Endothelial cell of umbilical vein (primary cell): ENCODE measurements at regions of chr2 and their contacts with region 1.

Region 1: DNA sequence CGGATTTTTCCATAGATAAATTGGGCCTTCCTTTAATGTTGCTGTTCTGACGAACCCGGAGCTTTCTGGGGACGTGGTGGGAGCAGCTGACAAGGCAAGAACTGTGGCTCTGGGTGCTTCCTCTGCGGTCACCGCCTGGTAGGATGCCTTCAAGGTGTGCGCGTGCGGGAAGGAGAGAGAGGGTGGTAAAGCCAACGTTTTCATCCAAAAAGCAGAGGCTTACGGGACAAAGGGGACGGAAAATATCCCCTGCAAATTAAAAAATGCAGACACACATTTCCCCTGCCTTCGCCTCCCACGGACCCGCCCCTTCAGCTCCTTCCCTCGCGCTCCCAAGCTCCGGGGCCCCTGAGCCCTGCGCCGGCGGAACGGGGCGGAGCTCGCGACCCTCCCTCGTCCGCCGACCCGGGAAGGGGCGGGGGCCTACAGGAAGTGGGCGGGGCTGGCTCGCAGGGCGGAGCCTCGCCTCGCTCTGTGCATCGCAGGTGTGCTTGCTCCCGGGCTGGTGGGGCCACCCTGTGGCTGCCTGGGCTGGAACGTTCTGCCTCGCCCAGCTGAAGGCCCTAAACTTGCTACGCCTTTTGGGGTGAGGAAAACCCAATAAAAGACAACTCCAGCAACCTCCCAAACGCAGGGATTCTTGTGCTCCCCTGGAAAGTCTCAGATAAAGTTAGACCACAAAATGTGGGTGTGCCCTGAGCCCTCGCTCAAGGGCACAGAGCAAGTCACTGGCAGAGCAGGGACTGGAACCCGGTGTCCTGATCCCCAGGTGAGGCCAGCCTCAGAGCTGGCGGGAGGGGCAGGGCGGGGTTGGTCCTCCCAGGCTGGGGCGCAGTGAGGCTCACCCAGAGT is 25.4 kb upstream of the SLC66A3 start:
- DNase-seq: no peak
- H3K4me3 ChIP-seq: no peak overlapping the region
- H3K27ac ChIP-seq: no peak overlapping the region
- H3K4me1 ChIP-seq: peaks cover 28% of the 10 kb centered on the region
- H3K27me3 ChIP-seq: peaks cover 0 to 1% of the 10 kb centered on the region in 2 experiments
- CTCF ChIP-seq: peak in 1 of 2 donors; percentile 20
- POLR2A ChIP-seq: no peak

Region 2: GRCh38 chr2:10935953-10936942 is 193.6 kb before region 1 on chr2:
- CTCF ChIA-PET with region 1: no interaction called
- POLR2A ChIA-PET with region 1: no interaction called
- dilution Hi-C with region 1: no loop called
- intact Hi-C with region 1: loop called (anchors 1 kb)
- DNase-seq: peak; percentile 96
- H3K4me3 ChIP-seq: no peak overlapping the region
- H3K27ac ChIP-seq: peak overlapping the region; percentile 88
- H3K4me1 ChIP-seq: peaks cover 31% of the 10 kb centered on the region
- H3K27me3 ChIP-seq: peaks cover 0 to 2% of the 10 kb centered on the region in 2 experiments
- CTCF ChIP-seq: no peak
- POLR2A ChIP-seq: no peak

Region 3: GRCh38 chr2:11203480-11203879 is 73.7 kb after region 1 on chr2:
- CTCF ChIA-PET with region 1: interaction called, 19 read pairs
- POLR2A ChIA-PET with region 1: no interaction called
- dilution Hi-C with region 1: no loop called
- intact Hi-C with region 1: loop called (anchors 2 kb)
- DNase-seq: peak; percentile 71
- H3K4me3 ChIP-seq: no peak overlapping the region
- H3K27ac ChIP-seq: peak overlapping the region; percentile 84
- H3K4me1 ChIP-seq: peaks cover 27% of the 10 kb centered on the region
- H3K27me3 ChIP-seq: no peaks in the 10 kb centered on the region
- CTCF ChIP-seq: no peak
- POLR2A ChIP-seq: no peak

Region 4: GRCh38 chr2:11239666-11240462 is 110.0 kb after region 1 on chr2:
- CTCF ChIA-PET with region 1: interaction called, 32 read pairs
- POLR2A ChIA-PET with region 1: no interaction called
- dilution Hi-C with region 1: no loop called
- intact Hi-C with region 1: no loop called
- DNase-seq: peak; percentile 50
- H3K4me3 ChIP-seq: no peak overlapping the region
- H3K27ac ChIP-seq: peak overlapping the region; percentile 10
- H3K4me1 ChIP-seq: peaks cover 4% of the 10 kb centered on the region
- H3K27me3 ChIP-seq: no peaks in the 10 kb centered on the region
- CTCF ChIP-seq: no peak
- POLR2A ChIP-seq: no peak

Region 5: DNA sequence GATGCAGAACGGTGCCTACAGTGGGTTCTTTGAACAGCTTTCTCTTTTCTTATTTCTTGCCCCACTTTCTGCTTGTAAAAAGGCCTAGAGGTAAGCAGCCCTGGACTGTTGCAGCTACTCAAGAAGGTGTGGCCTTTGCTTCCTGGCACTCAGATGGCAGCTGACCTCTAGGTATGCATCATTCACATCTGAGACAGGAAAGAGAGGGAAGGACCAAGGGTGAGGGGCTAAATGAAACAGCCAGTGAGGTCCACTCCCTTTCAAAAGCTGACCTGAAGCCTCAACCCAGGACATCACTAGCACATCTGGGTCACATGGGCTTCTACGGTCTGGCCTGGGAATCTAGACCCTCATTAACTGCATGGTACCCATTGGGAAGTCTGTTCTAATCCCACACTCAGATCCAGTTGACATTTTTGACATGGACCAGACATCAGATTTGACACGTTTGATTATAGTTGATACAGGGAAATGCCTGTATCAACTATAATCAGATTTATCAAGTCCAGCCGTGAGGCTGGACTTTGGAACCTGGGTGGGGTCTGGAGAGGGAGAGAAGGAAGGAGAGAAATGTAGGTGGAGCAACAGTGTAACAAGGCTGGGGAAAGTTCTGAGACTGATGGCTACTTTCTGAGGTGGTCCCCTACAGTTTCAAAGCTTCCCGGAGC is 275.9 kb after region 1 on chr2:
- CTCF ChIA-PET with region 1: interaction called, 162 read pairs
- POLR2A ChIA-PET with region 1: no interaction called
- dilution Hi-C with region 1: no loop called
- intact Hi-C with region 1: no loop called
- DNase-seq: no peak
- H3K4me3 ChIP-seq: no peak overlapping the region
- H3K27ac ChIP-seq: no peak overlapping the region
- H3K4me1 ChIP-seq: peaks cover 6% of the 10 kb centered on the region
- H3K27me3 ChIP-seq: no peaks in the 10 kb centered on the region
- CTCF ChIP-seq: no peak
- POLR2A ChIP-seq: no peak

Region 6: DNA sequence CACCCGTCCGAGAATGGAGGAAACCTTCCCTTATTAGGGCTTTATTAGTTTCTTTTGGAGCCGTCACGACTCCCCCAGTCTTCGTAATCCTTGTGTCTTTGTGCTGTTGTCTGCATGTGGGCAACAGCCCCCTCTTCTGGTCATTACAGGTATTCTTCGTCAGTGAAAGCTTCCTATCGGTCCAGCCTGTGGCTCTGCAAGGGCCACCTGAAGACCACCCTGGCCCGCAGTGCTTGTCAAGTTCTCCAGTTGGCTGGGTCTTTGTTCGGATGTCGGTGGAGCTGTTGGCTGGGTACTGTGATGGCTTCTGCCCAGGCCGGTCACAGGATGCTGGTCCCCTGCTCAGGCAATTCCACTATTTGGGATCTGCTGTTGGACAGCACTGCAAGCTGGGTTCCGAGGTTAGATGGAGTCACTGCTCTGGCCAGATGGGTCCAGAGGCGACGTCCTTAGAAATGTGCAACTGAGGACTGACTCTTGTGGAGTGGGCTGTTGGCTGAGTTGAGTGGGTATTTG is 317.0 kb after region 1 on chr2:
- CTCF ChIA-PET with region 1: interaction called, 187 read pairs
- POLR2A ChIA-PET with region 1: no interaction called
- dilution Hi-C with region 1: no loop called
- intact Hi-C with region 1: loop called (anchors 1 kb)
- DNase-seq: peak; percentile 71
- H3K4me3 ChIP-seq: no peak overlapping the region
- H3K27ac ChIP-seq: no peak overlapping the region
- H3K4me1 ChIP-seq: no peaks in the 10 kb centered on the region
- H3K27me3 ChIP-seq: no peaks in the 10 kb centered on the region
- CTCF ChIP-seq: peak; percentile 72 to 75
- POLR2A ChIP-seq: no peak

Region 7: DNA sequence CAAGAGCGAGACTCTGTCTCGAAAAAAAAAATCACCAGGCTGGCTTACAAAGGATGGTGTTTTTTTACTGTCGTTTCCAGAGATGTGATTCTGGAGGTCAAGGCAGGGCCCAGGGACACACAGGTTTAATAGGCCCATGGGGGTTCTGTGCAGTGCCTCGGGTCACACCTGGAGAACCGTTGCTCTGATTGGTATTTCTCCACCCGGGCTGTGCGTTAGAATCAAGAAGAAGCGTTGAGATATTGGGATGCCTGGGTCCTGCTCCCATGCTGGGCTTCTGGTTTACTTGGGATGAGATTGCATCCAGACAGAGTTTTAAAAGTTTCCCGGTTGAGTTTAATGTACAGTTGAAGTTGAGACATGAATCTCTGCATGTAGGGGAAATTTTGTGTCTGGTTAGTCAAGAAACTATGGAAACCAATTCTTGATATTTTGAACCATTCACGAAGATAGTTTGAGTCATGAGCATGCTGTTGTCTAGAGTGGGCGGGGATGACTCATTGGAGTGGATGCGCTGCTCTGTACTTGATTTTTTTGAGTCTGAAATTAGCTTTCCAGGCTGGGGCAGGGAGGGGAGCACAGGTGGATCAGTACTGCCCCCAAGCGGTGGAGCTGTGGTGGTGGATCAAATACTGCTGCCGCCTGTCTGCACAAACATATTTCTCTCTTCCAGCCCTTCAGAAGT is 454.2 kb after region 1 on chr2:
- CTCF ChIA-PET with region 1: interaction called, 239 read pairs
- POLR2A ChIA-PET with region 1: no interaction called
- dilution Hi-C with region 1: no loop called
- intact Hi-C with region 1: loop called (anchors 1 kb)
- DNase-seq: peak; percentile 87
- H3K4me3 ChIP-seq: no peak overlapping the region
- H3K27ac ChIP-seq: no peak overlapping the region
- H3K4me1 ChIP-seq: no peaks in the 10 kb centered on the region
- H3K27me3 ChIP-seq: no peaks in the 10 kb centered on the region
- CTCF ChIP-seq: peak; percentile 81 to 82
- POLR2A ChIP-seq: no peak